PC-3 (cell line): ENCODE measurements at regions of chr13 and their contacts with region 1.

Region 1: DNA sequence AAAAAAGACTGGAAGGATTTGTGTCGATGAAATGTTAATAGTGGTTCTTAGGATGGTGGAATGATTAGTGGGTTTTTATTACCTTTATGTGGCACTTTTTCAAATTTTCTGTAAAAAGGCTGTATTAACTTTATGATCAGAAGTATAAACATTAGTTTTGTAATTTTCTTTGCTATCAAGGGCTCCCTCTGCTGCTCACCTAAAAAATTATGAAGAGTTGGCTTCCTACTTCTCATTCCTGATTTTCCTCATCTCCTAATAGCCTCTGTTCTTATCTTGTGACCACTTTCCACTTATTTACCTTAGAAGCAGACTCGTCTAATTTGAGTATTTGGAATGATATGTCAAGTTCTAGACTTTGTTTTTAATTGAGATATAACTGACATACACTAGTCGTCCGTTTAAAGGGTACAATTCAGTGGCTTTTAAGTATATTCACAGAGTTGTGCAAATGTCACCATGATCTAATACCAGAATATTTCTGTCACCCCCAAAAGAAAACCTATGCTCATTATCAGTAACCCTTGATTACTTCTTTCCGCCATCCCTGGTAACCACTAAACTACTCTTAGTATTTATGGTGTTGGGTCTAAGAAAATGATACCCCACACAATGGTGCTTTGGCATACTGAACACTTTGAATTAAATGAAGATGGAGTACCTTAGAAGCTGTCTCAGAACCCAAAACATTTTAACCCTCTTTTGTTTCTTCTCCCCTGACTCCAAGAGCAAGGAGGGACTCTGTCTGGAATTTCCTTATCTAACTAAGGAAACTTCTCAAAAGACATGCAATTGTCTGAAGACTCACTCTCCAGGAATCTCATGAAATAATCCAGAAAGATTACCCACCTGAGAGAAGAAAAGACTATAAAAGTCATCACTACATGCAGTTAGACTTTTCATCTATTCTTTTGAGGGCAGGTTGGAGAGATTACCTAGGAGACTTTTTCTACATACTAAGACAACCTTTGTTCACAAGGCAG is 311.3 kb downstream of the DLEU7 start:
- DNase-seq: peak; percentile 55
- ATAC-seq: no peak; the same call in 1 of the 2 replicates
- H3K4me3 ChIP-seq: no peak overlapping the region
- H3K27ac ChIP-seq: no peak overlapping the region
- H3K4me1 ChIP-seq: 0 out of 2 replicates have a peak, but pooled peaks cover 10% of the 10 kb centered on the region
- H3K27me3 ChIP-seq: no peaks in the 10 kb centered on the region
- CTCF ChIP-seq: peak; percentile 64

Region 2: GRCh38 chr13:49976314-49977258 is 555.6 kb before region 1 on chr13:
- CTCF ChIA-PET with region 1: interaction called, 4 read pairs
- POLR2A ChIA-PET with region 1: no interaction called
- intact Hi-C with region 1: loop called (anchors 10 kb)
- DNase-seq: peak; percentile 72
- ATAC-seq: peak; percentile 91
- H3K4me3 ChIP-seq: peak overlapping the region; percentile 41; the same call in 1 of the 2 replicates
- H3K27ac ChIP-seq: peak overlapping the region; percentile 79
- H3K4me1 ChIP-seq: peaks cover 13% of the 10 kb centered on the region
- H3K27me3 ChIP-seq: no peaks in the 10 kb centered on the region
- CTCF ChIP-seq: peak; percentile 93

Region 3: GRCh38 chr13:50170447-50171037 is 361.7 kb before region 1 on chr13:
- CTCF ChIA-PET with region 1: no interaction called
- POLR2A ChIA-PET with region 1: no interaction called
- intact Hi-C with region 1: loop called (anchors 1 kb)
- DNase-seq: peak; percentile 32
- ATAC-seq: no peak; the same call in 1 of the 2 replicates
- H3K4me3 ChIP-seq: no peak overlapping the region
- H3K27ac ChIP-seq: no peak overlapping the region
- H3K4me1 ChIP-seq: no peaks in the 10 kb centered on the region
- H3K27me3 ChIP-seq: no peaks in the 10 kb centered on the region
- CTCF ChIP-seq: peak; percentile 62

Region 4: DNA sequence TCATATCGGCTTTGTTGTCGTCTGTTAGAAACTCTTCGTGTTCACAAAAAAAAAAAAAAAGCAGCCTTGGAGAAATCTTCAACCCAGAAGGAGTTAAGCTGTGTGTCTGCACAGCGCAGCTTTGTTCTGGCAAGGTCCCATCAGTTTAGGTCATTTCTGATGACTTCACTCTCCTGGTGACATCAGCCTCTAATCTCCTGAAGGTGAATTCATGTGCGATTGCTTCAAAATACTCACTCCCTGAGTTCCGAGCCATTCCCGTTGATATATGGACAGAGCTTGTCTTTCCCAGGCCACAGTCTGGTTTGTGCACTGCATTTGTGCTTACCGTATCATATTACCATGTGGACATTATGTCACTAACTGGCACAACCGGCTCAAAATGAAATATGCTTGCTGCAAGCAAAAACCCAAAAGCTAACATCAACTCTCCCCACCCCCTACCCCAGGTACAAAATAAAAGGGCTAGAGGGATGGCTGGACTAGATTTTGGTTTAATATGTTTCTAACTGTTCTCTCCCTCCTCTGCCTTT is 174.6 kb before region 1 on chr13:
- CTCF ChIA-PET with region 1: no interaction called
- POLR2A ChIA-PET with region 1: no interaction called
- intact Hi-C with region 1: loop called (anchors 10 kb)
- DNase-seq: peak; percentile 90
- ATAC-seq: peak; percentile 92
- H3K4me3 ChIP-seq: peak overlapping the region; percentile 24; the same call in 1 of the 2 replicates
- H3K27ac ChIP-seq: peak overlapping the region; percentile 84
- H3K4me1 ChIP-seq: peaks cover 37% of the 10 kb centered on the region
- H3K27me3 ChIP-seq: no peaks in the 10 kb centered on the region
- CTCF ChIP-seq: no peak

Region 5: DNA sequence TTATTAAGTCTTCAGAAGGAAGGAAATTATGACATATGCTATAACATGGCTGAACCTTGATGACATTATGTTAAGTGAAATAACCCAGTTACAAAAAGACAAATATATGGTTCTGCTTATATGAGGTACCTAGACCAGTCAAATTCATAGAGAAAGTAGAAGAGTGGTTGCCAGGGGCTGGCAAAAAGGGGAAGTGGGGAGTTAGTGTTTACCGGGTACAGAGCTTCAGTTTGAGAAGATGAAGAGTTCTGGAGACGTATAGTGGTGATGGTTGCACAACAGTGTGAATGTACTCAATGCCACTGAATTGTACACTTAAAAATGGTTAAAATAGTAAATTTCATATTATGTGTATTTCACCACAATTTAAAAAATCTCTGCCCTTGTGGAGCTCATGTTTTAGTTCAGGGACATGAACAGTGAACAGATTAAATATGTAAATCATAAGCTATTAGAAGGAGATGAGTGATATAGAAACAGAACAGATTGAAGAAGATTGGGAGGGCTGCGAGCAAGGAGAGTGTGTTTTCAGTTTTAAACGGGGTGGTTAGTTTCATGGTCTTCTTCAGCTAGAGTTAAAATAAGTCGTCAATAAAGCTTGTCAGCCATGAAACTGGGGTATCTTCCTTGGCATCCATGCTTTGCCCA is 161.8 kb before region 1 on chr13:
- CTCF ChIA-PET with region 1: no interaction called
- POLR2A ChIA-PET with region 1: no interaction called
- intact Hi-C with region 1: no loop called
- DNase-seq: no peak
- ATAC-seq: no peak
- H3K4me3 ChIP-seq: no peak overlapping the region
- H3K27ac ChIP-seq: no peak overlapping the region
- H3K4me1 ChIP-seq: peaks cover 15% of the 10 kb centered on the region
- H3K27me3 ChIP-seq: no peaks in the 10 kb centered on the region
- CTCF ChIP-seq: no peak

Region 6: GRCh38 chr13:50421473-50422130 is 110.6 kb before region 1 on chr13:
- CTCF ChIA-PET with region 1: no interaction called
- POLR2A ChIA-PET with region 1: no interaction called
- intact Hi-C with region 1: loop called (anchors 5 kb)
- DNase-seq: peak; percentile 69
- ATAC-seq: peak; percentile 97
- H3K4me3 ChIP-seq: no peak overlapping the region
- H3K27ac ChIP-seq: peak overlapping the region; percentile 52
- H3K4me1 ChIP-seq: peaks cover 21% of the 10 kb centered on the region
- H3K27me3 ChIP-seq: no peaks in the 10 kb centered on the region
- CTCF ChIP-seq: no peak

Region 7: GRCh38 chr13:50801087-50801931 is 269.1 kb after region 1 on chr13:
- CTCF ChIA-PET with region 1: no interaction called
- POLR2A ChIA-PET with region 1: no interaction called
- intact Hi-C with region 1: loop called (anchors 2 kb)
- DNase-seq: peak; percentile 71
- ATAC-seq: peak; percentile 86
- H3K4me3 ChIP-seq: no peak overlapping the region
- H3K27ac ChIP-seq: no peak overlapping the region
- H3K4me1 ChIP-seq: peaks cover 9% of the 10 kb centered on the region; the same call in 1 of the 2 replicates
- H3K27me3 ChIP-seq: no peaks in the 10 kb centered on the region
- CTCF ChIP-seq: peak; percentile 73

Region 8: DNA sequence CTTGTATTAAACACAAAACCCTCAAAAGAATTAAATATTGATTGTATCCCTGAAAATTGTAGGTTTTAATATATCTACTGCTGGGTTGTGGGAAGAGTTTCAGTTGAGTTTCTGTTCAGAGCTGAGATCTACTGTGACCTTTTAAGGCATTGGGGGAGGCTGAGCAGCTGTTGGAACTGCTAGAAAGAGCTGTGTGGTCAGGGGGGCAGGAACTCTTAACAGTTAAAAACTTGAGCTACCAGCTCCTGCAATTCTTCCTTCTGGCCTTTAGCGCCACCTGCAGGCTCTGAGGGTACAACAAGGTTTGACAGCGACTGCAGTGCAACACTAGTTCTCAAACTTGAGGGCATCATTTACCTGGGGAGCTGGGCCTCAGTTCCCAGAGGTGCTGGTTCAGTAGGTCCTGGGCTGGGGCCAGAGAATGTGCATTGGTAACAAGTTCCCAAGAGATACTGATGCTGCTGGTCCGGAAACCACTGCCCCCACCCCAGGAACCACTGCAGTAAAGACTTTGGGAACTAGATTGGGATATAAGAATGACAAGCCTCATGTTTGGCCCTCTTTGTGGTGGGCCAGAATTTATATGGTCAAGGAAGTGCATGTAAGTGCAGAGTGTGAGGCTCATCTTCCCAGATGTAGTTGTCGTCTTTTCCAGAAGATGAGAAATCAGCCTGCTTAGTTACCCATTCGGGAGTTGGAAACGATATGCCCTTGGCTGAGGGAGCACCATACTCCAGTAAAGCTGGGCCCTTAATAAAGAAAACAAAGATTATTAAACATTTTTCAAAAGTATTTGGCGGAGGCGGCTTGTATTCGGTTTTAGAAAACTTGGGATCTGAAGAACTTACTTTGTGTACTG is 380.0 kb after region 1 on chr13:
- CTCF ChIA-PET with region 1: no interaction called
- POLR2A ChIA-PET with region 1: no interaction called
- intact Hi-C with region 1: loop called (anchors 1 kb)
- DNase-seq: peak; percentile 86
- ATAC-seq: peak; percentile 9; the same call in 1 of the 2 replicates
- H3K4me3 ChIP-seq: peak overlapping the region; percentile 84; the same call in 1 of the 2 replicates
- H3K27ac ChIP-seq: no peak overlapping the region
- H3K4me1 ChIP-seq: peaks cover 24% of the 10 kb centered on the region
- H3K27me3 ChIP-seq: no peaks in the 10 kb centered on the region
- CTCF ChIP-seq: peak; percentile 82